ENCODE measurements at regions of chr14 and their contacts with region 1.

Region 1: DNA sequence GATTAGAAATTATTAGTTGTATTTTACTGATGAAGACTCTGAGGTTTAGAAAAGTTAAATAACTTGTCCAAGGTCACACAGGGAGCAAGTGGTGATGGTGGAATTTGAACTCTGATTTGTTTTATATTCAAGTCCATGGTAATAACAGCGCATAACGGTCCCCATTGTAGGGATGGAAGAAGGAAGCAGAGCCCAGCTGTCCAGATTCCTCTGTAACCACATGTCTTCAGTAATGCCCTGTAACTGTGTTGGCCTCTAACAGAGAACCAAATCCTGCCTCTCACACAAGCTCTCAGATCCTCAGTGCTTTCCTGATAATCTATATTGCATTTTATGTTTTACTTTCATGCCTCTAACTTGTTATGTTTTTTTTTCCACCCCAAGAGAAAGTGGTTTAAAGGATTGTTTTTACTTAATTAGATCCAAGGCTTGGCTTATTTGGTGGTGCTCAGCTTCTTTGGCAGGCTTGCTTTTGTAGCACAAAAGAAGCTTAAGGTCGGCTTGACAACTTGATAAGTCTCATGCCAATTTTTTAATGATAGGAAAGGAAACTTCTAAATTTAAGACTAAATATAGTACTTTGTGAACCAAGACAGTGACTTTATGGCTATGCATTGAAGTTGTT is 105.1 kb upstream of the SEL1L start:
- DNase-seq: no peak
- CTCF ChIP-seq: no peak

Region 2: GRCh38 chr14:81565441-81566290 is 73.1 kb before region 1 on chr14:
- CTCF ChIA-PET with region 1: no interaction called
- POLR2A ChIA-PET with region 1: no interaction called
- DNase-seq: peak; percentile 36
- CTCF ChIP-seq: peak; percentile 61

Region 3: GRCh38 chr14:81625343-81625742 is 13.4 kb before region 1 on chr14:
- CTCF ChIA-PET with region 1: interaction called, 15 read pairs
- POLR2A ChIA-PET with region 1: no interaction called
- DNase-seq: peak; percentile 20
- CTCF ChIP-seq: peak; percentile 39